ENCODE measurements at regions of chr2 and their contacts with region 1.

Region 1: DNA sequence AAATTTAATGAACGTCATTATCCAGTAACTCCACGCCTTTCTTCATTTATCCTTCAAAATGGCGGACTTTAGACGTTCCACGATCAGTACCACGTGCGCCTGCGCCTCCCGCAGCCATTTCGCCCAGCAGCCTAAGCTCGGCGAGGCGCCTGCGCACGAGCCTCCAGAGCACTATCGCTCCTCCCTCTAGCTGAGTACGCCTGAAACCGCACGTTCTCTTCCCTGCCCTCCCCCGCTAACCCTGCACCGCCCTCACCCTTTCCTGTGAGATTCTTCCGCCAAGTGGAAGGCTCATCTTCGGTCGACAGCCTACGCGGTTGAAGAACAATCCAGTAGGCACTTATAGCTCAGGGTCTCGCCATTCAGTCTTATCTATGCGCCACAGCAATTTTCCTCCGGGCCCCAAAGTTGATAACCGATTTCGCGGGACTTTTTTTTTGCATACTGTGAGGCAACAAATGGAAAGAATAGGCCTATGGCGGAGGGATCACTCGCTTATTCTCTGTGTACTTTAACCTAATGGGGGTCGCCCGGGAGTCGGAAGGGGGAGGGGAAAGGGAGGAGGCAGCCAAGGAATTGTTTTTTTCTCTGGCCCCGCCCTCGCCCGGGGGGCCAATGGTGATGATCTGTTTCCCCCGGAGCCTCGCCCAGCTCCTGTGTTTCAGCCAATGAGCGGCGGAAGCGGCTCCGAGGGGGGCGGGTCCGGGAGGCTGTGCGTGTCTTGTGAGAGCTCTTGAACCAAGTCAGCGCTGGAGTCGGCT is at the start of gene KDM3A:
- DNase-seq: peak; percentile 99
- ATAC-seq: peak; percentile 93
- H3K4me3 Mint-ChIP-seq: peak within 1 kb of the TSS; percentile 88
- H3K27ac Mint-ChIP-seq: peak within 1 kb of the TSS; percentile 99
- H3K4me1 Mint-ChIP-seq: peaks cover 21% of the 10 kb centered on the region
- H3K27me3 Mint-ChIP-seq: peaks cover 33% of the 10 kb centered on the region
- CTCF ChIP-seq: no peak
- total RNA-seq, gene KDM3A: 34.2 to 46.2 TPM (median 45.4 TPM) in 3 replicates

Region 2: DNA sequence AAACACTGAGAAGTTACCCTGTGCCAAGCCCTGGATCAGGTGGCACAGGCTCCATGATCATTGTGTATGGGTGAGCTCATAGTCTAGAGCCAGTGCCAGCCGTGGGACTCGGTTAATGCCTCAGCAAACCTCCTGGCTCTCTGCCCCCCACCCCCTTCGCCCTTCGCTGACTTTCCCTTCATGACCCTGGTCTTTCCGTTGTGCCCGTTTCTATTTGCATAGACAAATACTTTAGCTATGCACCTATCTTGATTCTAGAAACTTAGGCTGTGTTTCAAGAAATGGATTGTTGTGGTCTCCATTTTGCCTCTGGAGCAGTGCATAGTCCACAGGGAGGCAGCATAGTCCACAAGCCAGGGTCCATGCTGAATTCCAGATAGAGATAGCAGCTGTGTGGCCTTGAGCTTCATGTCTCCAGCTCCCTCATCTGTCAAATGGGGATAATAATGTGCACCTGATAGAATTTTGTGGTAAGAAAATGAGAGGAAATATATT is 44.5 kb before region 1 on chr2:
- CTCF ChIA-PET with region 1: interaction called, 10 read pairs
- POLR2A ChIA-PET with region 1: interaction called, 4 read pairs
- DNase-seq: peak; percentile 33
- ATAC-seq: peak; percentile 82
- H3K4me3 Mint-ChIP-seq: no peak overlapping the region
- H3K27ac Mint-ChIP-seq: no peak overlapping the region
- H3K4me1 Mint-ChIP-seq: no peaks in the 10 kb centered on the region; the same call in 1 of the 2 replicates
- H3K27me3 Mint-ChIP-seq: no peaks in the 10 kb centered on the region; the same call in 1 of the 2 replicates
- CTCF ChIP-seq: no peak

Region 3: DNA sequence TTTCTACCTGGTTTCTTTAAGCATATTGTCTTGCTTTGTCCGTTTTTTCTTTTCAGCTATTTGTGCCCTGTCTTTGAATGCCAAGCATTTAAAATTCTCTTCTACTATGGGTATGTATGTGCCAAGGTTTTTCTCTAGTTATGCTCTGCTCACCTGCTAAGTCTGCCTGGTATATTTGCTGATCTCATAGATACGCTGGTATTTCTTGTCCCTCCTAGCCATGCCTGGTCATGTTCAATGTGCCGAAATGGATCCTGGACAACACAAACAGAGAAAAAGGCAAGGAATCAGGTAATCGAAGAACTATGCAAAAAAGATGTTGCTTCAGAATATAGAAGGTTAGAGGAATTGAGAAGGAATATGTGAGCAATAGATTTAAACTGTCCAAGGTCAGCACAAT is 14.5 kb before region 1 on chr2:
- CTCF ChIA-PET with region 1: no interaction called
- POLR2A ChIA-PET with region 1: no interaction called
- DNase-seq: no peak
- ATAC-seq: no peak
- H3K4me3 Mint-ChIP-seq: no peak overlapping the region
- H3K27ac Mint-ChIP-seq: no peak overlapping the region
- H3K4me1 Mint-ChIP-seq: 0 out of 2 replicates have a peak, but pooled peaks cover 3% of the 10 kb centered on the region
- H3K27me3 Mint-ChIP-seq: peaks cover 15% of the 10 kb centered on the region
- CTCF ChIP-seq: no peak

Region 4: GRCh38 chr2:86453836-86454235 is 13.0 kb after region 1 on chr2:
- CTCF ChIA-PET with region 1: interaction called, 3 read pairs
- POLR2A ChIA-PET with region 1: interaction called, 10 read pairs
- DNase-seq: no peak
- ATAC-seq: no peak
- H3K4me3 Mint-ChIP-seq: no peak overlapping the region
- H3K27ac Mint-ChIP-seq: no peak overlapping the region
- H3K4me1 Mint-ChIP-seq: peaks cover 11% of the 10 kb centered on the region
- H3K27me3 Mint-ChIP-seq: no peaks in the 10 kb centered on the region
- CTCF ChIP-seq: no peak

Region 5: GRCh38 chr2:86480105-86480504 is 39.3 kb after region 1 on chr2:
- CTCF ChIA-PET with region 1: no interaction called
- POLR2A ChIA-PET with region 1: no interaction called
- DNase-seq: no peak
- ATAC-seq: no peak
- H3K4me3 Mint-ChIP-seq: no peak overlapping the region
- H3K27ac Mint-ChIP-seq: no peak overlapping the region
- H3K4me1 Mint-ChIP-seq: peaks cover 22% of the 10 kb centered on the region
- H3K27me3 Mint-ChIP-seq: no peaks in the 10 kb centered on the region
- CTCF ChIP-seq: no peak

Measured in WTC11 (cell line).